GM10248 (cell line): ENCODE measurements at regions of chrX and their contacts with region 1.

Region 1: DNA sequence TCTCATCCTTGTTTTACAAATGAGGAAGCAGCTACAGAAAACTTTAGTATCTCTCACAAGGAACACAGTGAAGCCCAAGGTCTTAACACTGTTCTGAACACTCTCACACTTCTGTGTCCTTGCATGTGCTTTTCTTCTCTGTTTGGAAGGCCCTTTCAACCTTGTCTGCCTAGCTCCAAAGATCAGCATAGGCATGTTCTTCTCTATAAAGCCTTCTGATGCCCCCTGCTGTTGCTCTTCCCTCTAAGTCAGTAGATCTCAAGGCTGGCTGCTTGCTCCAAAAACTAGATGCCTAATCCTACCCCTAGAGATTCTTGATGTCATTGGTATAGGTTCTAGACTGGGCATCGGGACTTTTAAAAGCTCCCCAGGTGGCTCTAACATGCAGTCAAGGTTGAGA is 5.9 kb downstream of the APOO start:
- DNase-seq: peak; percentile 52
- CTCF ChIP-seq: peak; percentile 55

Region 2: DNA sequence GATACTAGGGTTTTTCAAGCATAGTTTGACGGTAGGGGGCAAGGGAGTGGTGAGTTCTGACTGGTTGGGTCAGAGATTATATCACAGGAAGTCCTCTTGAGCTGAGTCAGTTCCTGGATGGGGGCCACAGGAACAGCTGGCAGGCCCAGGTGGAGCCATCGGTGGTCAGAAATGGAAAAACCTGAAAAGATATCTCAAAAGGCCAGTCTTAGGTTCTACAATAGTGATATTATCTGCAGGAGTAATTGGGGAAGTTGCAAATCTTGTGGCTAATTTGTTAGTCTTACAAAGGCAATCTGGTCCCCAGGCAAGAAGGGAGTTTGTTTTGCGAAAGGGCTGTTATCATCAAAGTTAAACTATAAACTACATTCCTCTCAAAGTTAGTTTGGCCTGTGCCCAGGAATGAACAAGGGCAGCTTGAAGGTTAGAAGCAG is 407.8 kb before region 1 on chrX:
- CTCF ChIA-PET with region 1: no interaction called
- POLR2A ChIA-PET with region 1: no interaction called
- DNase-seq: no peak
- CTCF ChIP-seq: no peak

Region 3: GRCh38 chrX:23694606-23695005 is 207.2 kb before region 1 on chrX:
- CTCF ChIA-PET with region 1: interaction called, 64 read pairs
- POLR2A ChIA-PET with region 1: no interaction called
- DNase-seq: peak; percentile 67
- CTCF ChIP-seq: peak; percentile 51

Region 4: GRCh38 chrX:23699636-23700194 is 202.1 kb before region 1 on chrX:
- CTCF ChIA-PET with region 1: interaction called, 64 read pairs
- POLR2A ChIA-PET with region 1: no interaction called
- DNase-seq: peak; percentile 24
- CTCF ChIP-seq: no peak

Region 5: GRCh38 chrX:23756157-23756559 is 145.6 kb before region 1 on chrX:
- CTCF ChIA-PET with region 1: interaction called, 17 read pairs
- POLR2A ChIA-PET with region 1: no interaction called
- DNase-seq: peak; percentile 65
- CTCF ChIP-seq: peak; percentile 42

Region 6: DNA sequence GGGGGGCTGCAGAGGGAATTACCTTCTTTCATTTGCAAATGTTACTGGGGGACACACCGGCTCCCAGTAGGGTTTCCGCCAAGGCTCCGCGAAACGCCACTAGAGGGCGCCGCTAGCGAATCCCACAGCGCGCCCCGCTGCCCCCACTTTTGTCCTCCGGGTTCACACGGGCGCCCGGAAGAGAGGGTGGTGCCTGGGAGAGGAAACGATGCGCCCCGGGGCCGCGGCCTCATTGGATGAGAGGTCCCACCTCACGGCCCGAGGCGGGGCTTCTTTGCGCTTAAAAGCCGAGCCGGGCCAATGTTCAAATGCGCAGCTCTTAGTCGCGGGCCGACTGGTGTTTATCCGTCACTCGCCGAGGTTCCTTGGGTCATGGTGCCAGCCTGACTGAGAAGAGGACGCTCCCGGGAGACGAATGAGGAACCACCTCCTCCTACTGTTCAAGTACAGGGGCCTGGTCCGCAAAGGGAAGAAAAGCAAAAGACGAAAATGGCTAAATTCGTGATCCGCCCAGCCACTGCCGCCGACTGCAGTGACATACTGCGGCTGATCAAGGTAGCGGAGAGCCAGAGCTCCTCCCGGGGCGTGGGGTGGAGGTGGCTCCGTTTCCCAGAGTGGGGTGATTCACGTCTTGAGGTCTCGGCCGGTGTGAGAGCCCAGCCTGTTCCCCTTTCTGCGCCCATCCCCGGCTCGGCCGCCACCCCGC is 118.8 kb before region 1 on chrX and contains the start of gene SAT1:
- CTCF ChIA-PET with region 1: interaction called, 54 read pairs
- POLR2A ChIA-PET with region 1: interaction called, 28 read pairs
- DNase-seq: peak; percentile 86
- CTCF ChIP-seq: peak; percentile 50

Region 7: GRCh38 chrX:23803931-23804381 is 97.8 kb before region 1 on chrX:
- CTCF ChIA-PET with region 1: interaction called, 11 read pairs
- POLR2A ChIA-PET with region 1: no interaction called
- DNase-seq: no peak
- CTCF ChIP-seq: no peak

Region 8: GRCh38 chrX:23888887-23889501 is 12.8 kb before region 1 on chrX:
- CTCF ChIA-PET with region 1: interaction called, 15 read pairs
- POLR2A ChIA-PET with region 1: no interaction called
- DNase-seq: no peak
- CTCF ChIP-seq: no peak